B cell (primary cell): ENCODE measurements at regions of chr3 and their contacts with region 1.

Region 1: DNA sequence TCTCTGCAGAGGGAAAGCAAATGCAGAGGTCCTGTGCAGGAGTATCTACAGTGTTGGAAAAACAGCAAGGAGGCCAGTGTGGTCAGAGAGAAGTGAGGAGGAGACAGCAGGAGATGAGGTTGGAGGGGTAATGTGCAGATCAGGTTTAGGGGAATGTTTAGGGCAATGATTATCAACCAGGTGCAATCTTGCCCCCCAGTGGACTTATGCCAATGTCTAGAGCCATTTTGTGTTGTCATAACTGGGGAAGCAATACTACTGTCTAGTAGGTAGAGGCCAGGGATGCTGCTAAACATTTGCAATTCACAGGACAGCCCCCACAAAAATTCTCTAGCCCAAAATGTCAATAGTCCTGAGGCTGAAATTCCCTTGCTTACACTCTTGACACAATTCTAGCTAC is 13.1 kb downstream of the CCDC191 start:
- DNase-seq: peak; percentile 55
- ATAC-seq: peak; percentile 61
- H3K4me3 ChIP-seq: no peak overlapping the region
- H3K4me3 Mint-ChIP-seq: no peak overlapping the region
- H3K27ac ChIP-seq: no peak overlapping the region
- H3K27ac Mint-ChIP-seq: peak overlapping the region; percentile 4
- H3K4me1 ChIP-seq: no peaks in the 10 kb centered on the region
- H3K4me1 Mint-ChIP-seq: peaks cover 5% of the 10 kb centered on the region
- H3K27me3 ChIP-seq: no peaks in the 10 kb centered on the region
- H3K27me3 Mint-ChIP-seq: no peaks in the 10 kb centered on the region
- CTCF ChIP-seq: peak; percentile 22

Region 2: DNA sequence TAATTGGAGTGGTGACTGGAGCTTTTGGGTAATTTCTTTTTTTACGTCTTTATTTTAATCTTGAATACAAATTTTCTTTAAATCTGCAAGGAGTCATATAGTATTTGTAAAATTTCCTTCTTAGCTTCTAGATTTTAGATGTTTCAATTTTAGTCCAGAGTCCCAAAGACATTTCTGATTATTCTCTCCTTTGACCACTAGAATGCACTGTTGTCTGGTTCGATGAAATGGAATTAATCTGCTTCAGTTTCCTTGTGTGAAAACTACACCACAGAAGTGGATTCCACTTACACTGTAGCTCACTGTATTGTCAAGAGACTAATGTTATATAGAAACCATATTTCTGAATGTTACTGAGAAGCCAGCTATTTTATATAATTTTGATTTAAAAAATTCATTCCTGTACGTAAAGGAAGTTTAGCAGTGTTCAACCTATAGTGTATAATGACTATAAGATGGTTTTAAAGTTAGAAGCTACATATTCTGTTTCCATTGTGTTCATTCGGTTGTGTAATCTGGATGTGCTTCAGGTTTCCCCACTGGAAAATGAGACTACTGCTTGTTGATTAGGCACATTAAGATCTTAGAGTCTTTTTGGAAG is 198.5 kb before region 1 on chr3:
- CTCF ChIA-PET with region 1: interaction called, 18 read pairs
- POLR2A ChIA-PET with region 1: no interaction called
- intact Hi-C with region 1: loop called (anchors 1 kb)
- DNase-seq: peak; percentile 53
- ATAC-seq: peak; percentile 36
- H3K4me3 ChIP-seq: no peak overlapping the region
- H3K4me3 Mint-ChIP-seq: no peak overlapping the region
- H3K27ac ChIP-seq: no peak overlapping the region
- H3K27ac Mint-ChIP-seq: no peak overlapping the region
- H3K4me1 ChIP-seq: peaks cover 0 to under 1% of the 10 kb centered on the region in 2 donors
- H3K4me1 Mint-ChIP-seq: peaks cover 12% of the 10 kb centered on the region
- H3K27me3 ChIP-seq: no peaks in the 10 kb centered on the region
- H3K27me3 Mint-ChIP-seq: no peaks in the 10 kb centered on the region
- CTCF ChIP-seq: peak; percentile 75

Region 3: GRCh38 chr3:114067804-114068203 is 24.6 kb after region 1 on chr3:
- CTCF ChIA-PET with region 1: no interaction called
- POLR2A ChIA-PET with region 1: no interaction called
- intact Hi-C with region 1: no loop called
- DNase-seq: no peak
- ATAC-seq: no peak
- H3K4me3 ChIP-seq: no peak overlapping the region
- H3K4me3 Mint-ChIP-seq: no peak overlapping the region
- H3K27ac ChIP-seq: no peak overlapping the region
- H3K27ac Mint-ChIP-seq: no peak overlapping the region
- H3K4me1 ChIP-seq: no peaks in the 10 kb centered on the region
- H3K4me1 Mint-ChIP-seq: peaks cover 5% of the 10 kb centered on the region
- H3K27me3 ChIP-seq: no peaks in the 10 kb centered on the region
- H3K27me3 Mint-ChIP-seq: no peaks in the 10 kb centered on the region
- CTCF ChIP-seq: no peak